ENCODE measurements at regions of chr6 and their contacts with region 1.

Region 1: GRCh38 chr6:117352466-117353081 is 73.2 kb downstream of the ROS1 start:
- DNase-seq: no peak
- ATAC-seq: no peak
- H3K4me3 ChIP-seq: no peak overlapping the region
- H3K27ac ChIP-seq: no peak overlapping the region
- H3K4me1 ChIP-seq: no peaks in the 10 kb centered on the region
- H3K27me3 ChIP-seq: no peaks in the 10 kb centered on the region
- CTCF ChIP-seq: peak in 8 of 9 donors; percentile 12 to 46 (median 38)

Region 2: GRCh38 chr6:117555882-117556498 is 203.4 kb after region 1 on chr6:
- intact Hi-C with region 1: loop called in 8 of 10 experiments (anchors 2 to 10 kb)
- DNase-seq: peak in 1 of 2 donors; percentile 41
- ATAC-seq: peak in 1 of 8 donors; percentile 37
- H3K4me3 ChIP-seq: no peak overlapping the region
- H3K27ac ChIP-seq: no peak overlapping the region
- H3K4me1 ChIP-seq: peaks cover 0 to 7% (median 0%) of the 10 kb centered on the region in 9 donors
- H3K27me3 ChIP-seq: no peaks in the 10 kb centered on the region
- CTCF ChIP-seq: peak; percentile 84 to 96 (median 88)

Region 3: DNA sequence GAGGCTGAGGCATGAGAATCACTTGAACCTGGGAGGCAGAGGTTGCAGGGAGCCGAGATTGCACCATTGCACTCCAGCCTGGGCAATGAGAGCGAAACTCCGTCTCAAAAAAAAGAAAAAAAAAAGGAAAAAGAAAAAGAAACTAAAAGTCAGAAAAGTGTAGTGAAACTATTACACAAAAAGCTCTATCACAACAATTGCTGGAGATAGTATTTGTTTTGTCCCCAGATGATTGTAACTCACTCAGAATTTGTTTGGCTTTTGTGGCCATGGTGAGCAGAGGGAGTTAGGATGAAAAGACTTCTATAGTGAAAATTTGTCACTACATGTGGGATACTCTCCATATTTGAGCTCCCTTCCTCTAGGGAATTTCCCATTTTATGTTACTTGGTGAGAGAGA is 254.9 kb after region 1 on chr6:
- intact Hi-C with region 1: loop called in 7 of 10 experiments (anchors 2 to 10 kb)
- DNase-seq: no peak
- ATAC-seq: no peak
- H3K4me3 ChIP-seq: no peak overlapping the region
- H3K27ac ChIP-seq: no peak overlapping the region
- H3K4me1 ChIP-seq: peaks cover 0 to 7% (median 6%) of the 10 kb centered on the region in 9 donors
- H3K27me3 ChIP-seq: peaks cover 0 to 12% (median 2%) of the 10 kb centered on the region in 7 donors
- CTCF ChIP-seq: no peak

Measured in heart right ventricle (tissue), 16 donors.